Left cardiac atrium (tissue), 4 donors: ENCODE measurements at regions of chr15 and their contacts with region 1.

Region 1: GRCh38 chr15:74604983-74605794 is 10.4 kb upstream of the CLK3 start:
- DNase-seq: no peak
- ATAC-seq: no peak

Region 2: GRCh38 chr15:74497584-74497983 is 107.6 kb before region 1 on chr15:
- intact Hi-C with region 1: no loop called
- DNase-seq: no peak
- ATAC-seq: no peak

Region 3: GRCh38 chr15:74545880-74546656 is 59.1 kb before region 1 on chr15:
- intact Hi-C with region 1: loop called (anchors 5 kb)
- DNase-seq: peak; percentile 99
- ATAC-seq: peak; percentile 97

Region 4: DNA sequence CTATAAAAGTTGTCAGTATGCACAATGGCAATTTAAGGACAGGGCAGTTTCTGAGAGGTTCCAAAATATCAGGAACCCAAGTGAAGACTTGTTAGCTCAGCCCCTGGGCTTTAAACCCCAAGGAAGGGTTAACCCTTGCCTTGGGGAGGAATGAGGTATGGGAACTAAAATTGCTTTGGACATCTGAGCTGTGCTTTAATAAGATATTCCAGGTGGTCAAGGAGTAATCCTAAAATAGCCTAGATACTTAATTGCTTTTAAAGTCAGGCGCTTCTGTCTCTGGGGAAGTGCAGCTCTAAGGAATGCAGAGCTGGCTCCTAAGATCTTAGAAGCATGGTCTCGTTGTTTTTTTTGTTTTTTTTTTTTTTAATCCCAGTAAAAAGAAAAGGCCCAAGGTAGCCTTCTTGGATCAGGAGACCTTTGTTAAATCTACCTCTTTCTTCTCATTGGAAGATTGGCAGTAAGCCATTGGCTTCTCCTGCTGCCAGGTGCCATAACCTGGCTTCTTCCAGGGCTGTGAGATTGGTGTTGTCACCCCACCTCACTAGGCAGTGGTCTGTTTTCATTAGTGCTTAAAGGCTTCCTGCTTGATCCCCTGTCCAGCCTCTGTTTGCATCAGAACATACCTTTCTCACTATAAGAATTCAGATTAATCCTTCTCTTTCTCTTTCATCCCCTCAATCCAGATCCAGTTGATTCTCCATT is 39.7 kb before region 1 on chr15:
- intact Hi-C with region 1: no loop called
- DNase-seq: no peak
- ATAC-seq: no peak